ENCODE measurements at regions of chr21 and their contacts with region 1.

Region 1: GRCh38 chr21:29342363-29342957 is 43.7 kb downstream of the BACH1 start:
- DNase-seq: peak; percentile 68
- ATAC-seq: peak; percentile 93
- H3K4me3 Mint-ChIP-seq: peak overlapping the region; percentile 31
- H3K27ac Mint-ChIP-seq: peak overlapping the region; percentile 81
- H3K4me1 Mint-ChIP-seq: peaks cover 39% of the 10 kb centered on the region
- H3K27me3 Mint-ChIP-seq: no peaks in the 10 kb centered on the region
- CTCF ChIP-seq: no peak

Region 2: DNA sequence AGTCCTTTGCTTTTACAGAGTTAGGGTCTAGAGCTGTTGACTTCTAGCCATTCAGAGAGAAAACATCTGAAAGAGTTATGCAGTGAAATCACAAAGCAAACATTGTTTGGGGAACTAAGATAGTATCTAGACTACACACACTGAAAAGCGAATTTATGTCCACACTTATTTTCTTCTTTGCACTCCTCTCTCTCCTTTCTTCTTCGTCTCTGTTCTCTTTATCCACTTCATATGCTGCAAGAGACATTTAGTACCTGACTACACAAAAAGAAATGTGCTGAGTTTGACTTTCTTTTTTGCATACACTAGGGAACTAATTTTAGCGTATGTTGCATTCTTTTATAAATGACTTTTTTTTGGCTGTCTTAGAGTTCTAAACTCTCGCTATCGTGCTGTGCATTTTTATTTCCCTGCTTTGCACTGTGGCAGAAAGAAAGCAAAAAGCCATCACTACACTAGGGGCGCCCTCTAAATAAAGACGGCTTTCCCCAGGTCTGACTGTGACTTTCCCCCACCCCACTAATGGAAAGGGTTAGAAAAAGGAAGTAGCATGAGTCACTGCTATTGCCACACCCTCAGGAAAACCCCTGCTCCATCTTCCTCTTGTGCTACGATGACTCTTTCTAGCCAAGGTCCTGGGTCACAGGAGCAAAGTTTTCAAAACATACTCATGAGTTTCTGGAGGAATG is 146.3 kb before region 1 on chr21:
- CTCF ChIA-PET with region 1: interaction called, 3 read pairs
- POLR2A ChIA-PET with region 1: no interaction called
- intact Hi-C with region 1: loop called (anchors 10 kb)
- DNase-seq: peak; percentile 88
- ATAC-seq: peak; percentile 99
- H3K4me3 Mint-ChIP-seq: peak overlapping the region; percentile 70
- H3K27ac Mint-ChIP-seq: peak overlapping the region; percentile 92
- H3K4me1 Mint-ChIP-seq: peaks cover 29% of the 10 kb centered on the region
- H3K27me3 Mint-ChIP-seq: no peaks in the 10 kb centered on the region
- CTCF ChIP-seq: peak; percentile 75

Region 3: GRCh38 chr21:29232601-29233546 is 109.6 kb before region 1 on chr21:
- CTCF ChIA-PET with region 1: no interaction called
- POLR2A ChIA-PET with region 1: no interaction called
- intact Hi-C with region 1: loop called (anchors 10 kb)
- DNase-seq: peak; percentile 7
- ATAC-seq: no peak
- H3K4me3 Mint-ChIP-seq: no peak overlapping the region
- H3K27ac Mint-ChIP-seq: peak overlapping the region; percentile 47
- H3K4me1 Mint-ChIP-seq: peaks cover 41% of the 10 kb centered on the region
- H3K27me3 Mint-ChIP-seq: peaks cover 2% of the 10 kb centered on the region
- CTCF ChIP-seq: no peak